ENCODE measurements at regions of chr1 and their contacts with region 1.

Region 1: DNA sequence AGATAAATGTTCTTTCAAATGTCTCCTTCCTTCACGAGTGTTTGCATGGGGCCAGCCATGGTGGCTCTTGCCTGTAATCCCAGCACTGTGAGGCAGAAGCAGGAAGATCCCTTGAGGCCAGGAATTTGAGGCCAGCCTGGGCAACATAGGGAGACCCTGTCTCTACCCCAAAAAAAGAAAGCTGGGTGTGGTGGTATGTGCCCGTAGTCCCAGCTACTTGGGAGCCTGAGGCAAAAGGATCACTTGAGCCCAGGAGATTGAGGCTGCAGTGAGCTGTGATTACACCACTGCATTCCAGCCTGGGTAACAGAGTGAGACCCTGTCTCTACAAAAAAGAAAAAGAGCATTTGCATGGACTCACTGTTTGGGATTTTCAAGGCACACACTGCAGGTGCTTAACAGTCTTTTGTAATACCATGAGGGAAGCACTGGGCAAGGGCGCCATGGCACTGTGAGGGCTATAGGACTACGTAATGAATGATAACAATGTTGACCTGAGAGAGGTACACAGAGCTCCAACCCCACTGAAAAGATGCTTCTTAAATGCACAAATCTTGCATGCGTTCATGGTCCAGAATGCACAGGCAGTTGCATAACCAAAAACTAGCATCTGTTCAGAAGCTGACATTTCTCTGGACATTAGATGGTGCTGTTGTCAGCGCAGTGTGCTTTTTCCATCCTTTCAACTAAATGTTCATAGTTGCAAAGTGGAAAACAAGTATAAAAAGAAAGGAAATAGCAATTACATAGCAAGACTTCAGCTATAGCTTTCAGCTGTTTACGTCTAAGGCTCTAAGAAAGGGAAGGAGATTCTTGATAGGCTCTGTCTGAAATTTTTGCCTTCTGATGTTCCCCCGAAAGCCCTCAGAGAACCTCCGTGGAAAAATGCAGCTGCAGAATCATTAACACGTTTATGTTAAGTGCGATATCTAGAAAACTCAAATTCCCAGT is 7.8 kb upstream of the TARBP1 start:
- DNase-seq: no peak
- H3K4me3 ChIP-seq: no peak overlapping the region
- CTCF ChIP-seq: peak; percentile 71

Region 2: GRCh38 chr1:234599617-234600417 is 113.0 kb after region 1 on chr1:
- CTCF ChIA-PET with region 1: interaction called, 13 read pairs
- POLR2A ChIA-PET with region 1: interaction called, 3 read pairs
- DNase-seq: no peak
- H3K4me3 ChIP-seq: peak overlapping the region; percentile 61
- CTCF ChIP-seq: no peak

Region 3: DNA sequence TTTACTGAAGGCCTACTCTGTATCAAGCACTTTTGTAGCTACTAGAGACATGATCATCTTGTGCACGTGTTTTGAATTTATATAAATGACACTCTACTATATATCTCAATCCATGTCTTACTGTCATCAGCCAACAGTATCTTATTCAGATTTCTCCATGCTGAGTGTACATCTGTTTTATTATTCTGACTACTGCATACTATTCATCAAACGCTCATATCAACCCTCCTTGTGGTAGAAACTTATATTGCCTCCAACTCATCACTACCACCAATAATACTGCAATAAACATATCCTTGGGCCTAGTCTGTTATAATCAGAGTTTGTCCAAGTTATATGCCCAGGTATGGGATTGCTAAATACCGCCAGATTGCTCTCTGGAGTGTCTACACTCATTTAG is 204.8 kb after region 1 on chr1:
- CTCF ChIA-PET with region 1: interaction called, 12 read pairs
- POLR2A ChIA-PET with region 1: no interaction called
- DNase-seq: no peak
- H3K4me3 ChIP-seq: no peak overlapping the region
- CTCF ChIP-seq: peak; percentile 19

Region 4: DNA sequence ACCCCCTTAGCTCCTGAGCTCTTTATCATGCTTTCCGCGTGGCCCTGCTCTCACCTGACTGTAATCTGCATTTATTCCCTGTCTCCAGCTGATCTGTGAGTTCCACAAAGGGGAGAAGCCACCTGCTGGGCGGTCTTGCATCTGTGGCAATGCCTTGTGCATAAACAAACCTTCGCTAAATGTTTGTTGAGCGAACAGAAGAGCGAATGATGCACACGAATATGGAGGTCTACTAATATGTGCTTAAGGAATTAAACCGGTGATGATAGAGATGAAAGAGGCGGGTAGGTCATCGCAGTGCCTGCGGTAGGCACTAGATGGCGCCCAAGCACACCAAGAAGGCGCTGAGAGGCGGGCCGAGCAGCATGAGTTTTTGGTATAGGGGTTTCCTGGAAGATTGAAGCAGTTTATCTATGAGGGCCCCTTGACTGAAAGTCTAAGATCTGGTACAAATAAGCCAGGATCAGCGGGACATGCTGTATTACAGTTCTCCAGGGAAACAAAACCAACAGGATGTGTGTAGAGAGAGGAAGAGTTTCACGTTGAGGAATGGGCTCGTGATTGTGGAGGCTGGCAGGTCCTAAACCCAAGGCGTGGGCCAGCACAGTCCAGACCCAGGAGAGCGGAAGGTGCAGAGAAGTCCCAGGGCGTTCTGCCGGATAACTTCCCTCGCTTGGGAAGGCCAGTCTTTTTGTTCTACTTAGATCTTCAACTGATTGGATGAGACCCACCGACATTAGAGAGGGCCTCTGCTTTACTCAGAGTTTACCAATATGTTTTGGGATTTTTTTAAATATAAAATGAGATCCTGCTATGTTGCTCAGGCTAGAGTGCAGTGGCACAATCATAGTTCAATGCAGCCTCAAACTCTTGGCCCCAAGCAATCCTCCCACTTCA is 607.2 kb after region 1 on chr1:
- CTCF ChIA-PET with region 1: interaction called, 73 read pairs
- POLR2A ChIA-PET with region 1: no interaction called
- DNase-seq: no peak
- H3K4me3 ChIP-seq: no peak overlapping the region
- CTCF ChIP-seq: peak; percentile 87

Region 5: DNA sequence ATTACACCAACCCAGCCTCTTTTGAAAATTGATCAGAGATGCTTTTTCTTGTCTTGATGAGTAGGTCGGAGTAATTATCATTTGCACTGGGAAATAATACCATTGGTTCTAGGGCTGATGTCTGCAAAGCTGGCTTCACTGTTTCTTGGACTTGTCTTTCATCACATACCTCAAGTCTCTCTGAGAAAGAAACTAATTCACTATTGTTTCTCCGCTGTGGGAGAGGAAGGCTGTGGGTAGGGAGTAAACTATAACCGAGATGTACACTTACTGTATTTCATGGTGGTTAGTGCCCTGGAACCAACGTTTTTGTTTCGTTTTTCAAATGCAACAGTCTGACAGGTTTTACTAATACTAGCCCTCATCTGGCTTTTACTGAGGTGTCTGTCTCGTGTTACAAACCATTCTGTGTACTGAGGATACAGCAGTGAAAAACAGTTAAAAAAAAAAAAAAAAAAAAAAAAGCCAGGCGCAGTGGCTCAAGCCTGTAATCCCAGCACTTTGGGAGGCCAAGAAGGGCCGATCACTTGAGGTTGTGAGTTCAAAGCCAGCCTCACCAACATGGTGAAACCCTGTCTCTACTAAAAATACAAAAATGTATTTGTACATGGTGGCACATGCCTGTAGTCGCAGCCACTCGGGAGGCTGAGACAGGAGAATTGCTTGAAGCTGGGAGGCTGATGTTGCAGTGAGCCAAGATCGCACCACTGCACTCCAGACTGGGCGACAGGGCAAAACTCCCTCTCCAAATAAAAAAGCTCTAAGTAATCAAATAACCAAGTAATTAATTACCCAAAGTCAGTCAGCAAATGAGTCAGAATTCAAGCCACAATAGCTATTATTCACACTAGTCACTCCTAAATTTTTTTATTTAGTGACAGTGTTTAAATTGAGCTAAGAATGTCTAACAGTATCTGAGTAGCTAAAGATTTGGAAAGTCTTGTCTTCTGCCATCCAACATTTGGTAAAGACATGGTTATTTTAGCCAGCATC is 618.6 kb after region 1 on chr1:
- CTCF ChIA-PET with region 1: interaction called, 14 read pairs
- POLR2A ChIA-PET with region 1: no interaction called
- DNase-seq: no peak
- H3K4me3 ChIP-seq: no peak overlapping the region
- CTCF ChIP-seq: no peak